Right ventricle myocardium inferior (tissue), 1 donor: ENCODE measurements at regions of chr10 and their contacts with region 1.

Region 1: DNA sequence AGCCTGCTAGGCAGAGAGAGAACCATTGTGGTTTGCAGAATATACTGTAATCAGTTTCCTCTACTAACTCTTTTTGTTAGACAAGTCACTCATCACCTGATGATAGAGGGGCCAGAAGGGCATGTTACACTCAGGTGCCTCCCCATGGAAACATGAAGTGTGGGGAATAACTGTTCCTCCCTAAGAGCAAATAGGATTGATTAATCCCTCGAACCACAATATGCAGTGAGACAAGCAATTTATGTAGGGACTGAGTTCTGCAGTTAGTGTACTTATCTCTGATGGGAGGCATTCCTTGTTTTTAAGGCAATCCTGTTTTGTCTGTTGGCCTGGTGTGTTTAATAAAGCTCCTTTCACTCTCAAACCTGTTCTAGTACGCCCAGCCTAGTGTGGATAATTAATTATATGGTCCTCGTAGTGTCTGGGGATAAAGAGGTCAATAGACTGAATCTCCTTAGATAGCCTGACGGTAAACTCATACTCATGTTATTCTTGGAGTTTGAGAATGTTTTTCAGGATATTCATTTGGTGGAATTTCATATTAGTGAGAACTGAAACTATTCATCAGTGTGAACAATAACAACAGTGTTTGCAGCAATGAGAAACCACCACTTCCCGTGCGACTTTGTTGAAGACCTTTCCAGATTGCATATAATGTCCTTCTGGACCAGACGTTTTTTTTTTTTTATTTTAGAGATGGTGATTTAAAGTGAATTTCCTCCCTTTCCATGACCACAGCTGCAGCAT is 344.8 kb upstream of the FZD8 start:
- DNase-seq: no peak
- ATAC-seq: no peak

Region 2: DNA sequence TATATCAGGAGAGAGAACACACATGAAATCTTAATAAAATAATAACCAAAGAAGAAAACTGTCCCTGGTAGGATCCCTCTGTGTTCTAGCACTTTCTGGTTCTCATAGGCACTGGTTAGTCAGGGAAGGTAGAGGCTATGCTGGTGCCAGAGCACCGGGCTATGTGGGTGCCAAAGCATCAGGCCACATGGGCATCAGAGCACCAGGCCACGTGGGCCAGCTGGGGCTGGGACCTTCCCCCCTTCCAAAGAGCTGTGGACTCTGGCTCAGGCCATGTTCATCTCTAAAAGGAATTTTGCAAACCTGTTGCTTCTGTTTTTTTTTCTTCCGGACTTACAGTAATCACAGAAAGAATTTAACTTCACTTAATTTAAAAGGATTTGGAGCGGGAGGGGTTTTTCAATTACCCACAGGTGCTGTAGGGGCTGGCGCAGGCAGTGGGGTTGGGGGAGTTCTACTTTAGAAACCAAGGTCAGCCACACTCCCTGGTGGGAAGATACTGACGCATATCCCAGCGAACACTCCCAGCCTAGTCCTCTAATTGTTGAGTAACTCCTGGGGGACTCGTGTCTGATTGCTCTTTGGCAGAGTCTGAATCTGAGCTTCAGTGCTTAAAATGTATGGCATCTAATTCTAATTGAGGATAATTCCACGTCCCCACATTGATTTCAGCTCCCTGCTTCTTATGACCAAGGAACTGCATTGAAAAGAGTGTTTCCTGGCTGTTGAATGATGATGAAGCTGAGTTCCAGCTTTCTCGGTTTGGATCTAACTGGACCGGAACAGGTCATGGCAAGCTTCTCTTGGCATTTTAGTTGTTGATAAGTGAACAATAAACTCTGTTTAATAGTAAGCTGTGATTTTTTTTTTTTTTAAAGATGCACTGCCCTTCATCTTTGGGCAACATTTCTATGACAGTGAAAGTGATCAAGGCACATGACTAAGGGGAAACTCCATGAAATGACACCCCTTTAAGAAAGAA is 234.2 kb before region 1 on chr10:
- intact Hi-C with region 1: no loop called
- DNase-seq: no peak
- ATAC-seq: peak; percentile 93

Region 3: GRCh38 chr10:36171953-36172940 is 185.3 kb after region 1 on chr10:
- intact Hi-C with region 1: loop called (anchors 10 kb)
- DNase-seq: no peak
- ATAC-seq: no peak